ENCODE measurements at regions of chr17 and their contacts with region 1.

Region 1: GRCh38 chr17:32783602-32784001 is 93.3 kb downstream of the MYO1D start:
- DNase-seq: no peak
- ATAC-seq: peak; percentile 34
- H3K4me3 Mint-ChIP-seq: no peak overlapping the region
- H3K27ac Mint-ChIP-seq: no peak overlapping the region
- H3K4me1 Mint-ChIP-seq: no peaks in the 10 kb centered on the region
- H3K27me3 Mint-ChIP-seq: no peaks in the 10 kb centered on the region
- CTCF ChIP-seq: peak; percentile 81

Region 2: GRCh38 chr17:32805029-32805976 is 21.7 kb after region 1 on chr17:
- CTCF ChIA-PET with region 1: interaction called, 10 read pairs
- POLR2A ChIA-PET with region 1: no interaction called
- intact Hi-C with region 1: no loop called
- DNase-seq: no peak
- ATAC-seq: no peak
- H3K4me3 Mint-ChIP-seq: no peak overlapping the region
- H3K27ac Mint-ChIP-seq: no peak overlapping the region
- H3K4me1 Mint-ChIP-seq: peaks cover 4% of the 10 kb centered on the region
- H3K27me3 Mint-ChIP-seq: peaks cover 4% of the 10 kb centered on the region
- CTCF ChIP-seq: no peak

Region 3: DNA sequence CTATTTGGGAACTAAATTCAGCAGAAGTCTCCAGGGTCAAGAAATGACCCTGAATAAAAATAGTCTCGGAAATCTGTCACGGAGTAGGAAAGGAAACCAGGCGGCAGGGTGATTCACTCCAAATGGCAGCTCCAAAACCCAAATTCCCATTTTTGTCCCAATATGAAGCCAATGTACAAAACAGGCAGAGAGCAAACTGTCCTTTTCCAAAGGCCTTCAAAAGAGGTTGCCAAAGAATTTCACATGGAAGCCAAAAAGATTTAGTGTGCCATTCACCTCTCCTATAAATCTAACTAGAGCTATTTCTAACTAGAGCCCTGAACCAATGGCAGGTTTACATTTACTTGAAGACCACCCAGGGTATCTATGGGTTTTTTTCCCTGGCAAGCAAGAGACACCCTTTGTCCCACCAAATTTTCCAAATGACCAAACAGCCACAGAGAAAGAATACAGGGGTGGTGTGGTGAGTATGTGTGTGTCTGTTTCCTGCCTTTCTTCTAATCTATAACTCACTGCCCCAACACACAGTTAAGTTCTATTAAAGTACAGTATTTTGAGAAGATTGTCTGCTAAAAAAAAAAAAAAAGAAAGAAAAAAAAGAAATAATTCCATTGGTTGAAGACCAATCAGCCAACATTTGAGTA is 86.5 kb after region 1 on chr17:
- CTCF ChIA-PET with region 1: interaction called, 130 read pairs
- POLR2A ChIA-PET with region 1: no interaction called
- intact Hi-C with region 1: loop called (anchors 5 kb)
- DNase-seq: no peak
- ATAC-seq: no peak
- H3K4me3 Mint-ChIP-seq: no peak overlapping the region
- H3K27ac Mint-ChIP-seq: no peak overlapping the region
- H3K4me1 Mint-ChIP-seq: no peaks in the 10 kb centered on the region
- H3K27me3 Mint-ChIP-seq: no peaks in the 10 kb centered on the region
- CTCF ChIP-seq: no peak

Region 4: DNA sequence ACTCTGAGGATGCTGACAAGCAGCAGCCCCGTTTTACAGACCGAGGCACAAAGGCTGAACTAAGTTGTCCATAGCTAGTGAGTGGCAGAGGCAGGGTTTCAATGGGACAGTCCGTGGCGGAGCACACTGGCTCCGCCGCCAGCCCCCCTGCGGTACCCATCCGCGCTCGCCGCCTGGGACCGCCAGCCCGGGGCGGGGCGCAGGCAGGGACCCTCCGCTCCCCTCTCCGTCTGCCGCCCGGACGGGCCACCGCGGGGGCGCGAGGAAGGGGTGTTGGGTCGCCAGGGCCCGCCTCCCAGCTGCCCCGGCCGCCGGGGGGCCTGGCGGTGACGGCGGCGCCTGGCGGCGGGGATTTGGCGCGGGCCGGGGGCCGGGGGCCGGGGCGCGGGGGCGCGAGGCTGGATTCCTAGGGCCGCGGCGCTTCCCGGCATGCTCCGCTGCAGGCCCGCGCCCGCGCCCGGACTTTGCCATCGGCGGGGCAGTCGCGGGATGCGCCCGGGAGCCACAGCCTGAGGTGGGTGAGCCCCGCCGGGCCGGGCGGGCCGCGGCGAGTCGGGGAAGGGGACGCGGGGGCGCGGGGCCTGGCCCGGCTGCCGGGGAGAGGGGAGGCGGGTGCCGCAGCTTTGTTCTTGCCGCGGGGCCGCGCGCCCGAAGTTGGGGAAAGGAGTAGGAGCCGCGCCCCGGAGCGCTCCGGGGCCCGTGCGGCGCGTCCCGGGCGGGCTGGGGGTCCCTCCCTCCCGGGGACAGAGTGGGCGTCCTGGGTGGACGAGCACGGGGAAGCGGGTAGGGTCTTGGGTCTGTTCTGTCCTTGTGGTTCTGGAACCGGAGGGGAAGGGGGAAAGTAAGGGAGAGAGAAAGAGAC is 144.4 kb after region 1 on chr17 and contains the start of gene TMEM98:
- CTCF ChIA-PET with region 1: interaction called, 12 read pairs
- POLR2A ChIA-PET with region 1: no interaction called
- intact Hi-C with region 1: no loop called
- DNase-seq: peak; percentile 7
- ATAC-seq: peak; percentile 30
- H3K4me3 Mint-ChIP-seq: peak within 1 kb of the TSS; percentile 46
- H3K27ac Mint-ChIP-seq: no peak within 1 kb of the TSS
- H3K4me1 Mint-ChIP-seq: peaks cover 4% of the 10 kb centered on the region
- H3K27me3 Mint-ChIP-seq: peaks cover 33% of the 10 kb centered on the region
- CTCF ChIP-seq: no peak
- total RNA-seq, gene TMEM98: not detected

Region 5: DNA sequence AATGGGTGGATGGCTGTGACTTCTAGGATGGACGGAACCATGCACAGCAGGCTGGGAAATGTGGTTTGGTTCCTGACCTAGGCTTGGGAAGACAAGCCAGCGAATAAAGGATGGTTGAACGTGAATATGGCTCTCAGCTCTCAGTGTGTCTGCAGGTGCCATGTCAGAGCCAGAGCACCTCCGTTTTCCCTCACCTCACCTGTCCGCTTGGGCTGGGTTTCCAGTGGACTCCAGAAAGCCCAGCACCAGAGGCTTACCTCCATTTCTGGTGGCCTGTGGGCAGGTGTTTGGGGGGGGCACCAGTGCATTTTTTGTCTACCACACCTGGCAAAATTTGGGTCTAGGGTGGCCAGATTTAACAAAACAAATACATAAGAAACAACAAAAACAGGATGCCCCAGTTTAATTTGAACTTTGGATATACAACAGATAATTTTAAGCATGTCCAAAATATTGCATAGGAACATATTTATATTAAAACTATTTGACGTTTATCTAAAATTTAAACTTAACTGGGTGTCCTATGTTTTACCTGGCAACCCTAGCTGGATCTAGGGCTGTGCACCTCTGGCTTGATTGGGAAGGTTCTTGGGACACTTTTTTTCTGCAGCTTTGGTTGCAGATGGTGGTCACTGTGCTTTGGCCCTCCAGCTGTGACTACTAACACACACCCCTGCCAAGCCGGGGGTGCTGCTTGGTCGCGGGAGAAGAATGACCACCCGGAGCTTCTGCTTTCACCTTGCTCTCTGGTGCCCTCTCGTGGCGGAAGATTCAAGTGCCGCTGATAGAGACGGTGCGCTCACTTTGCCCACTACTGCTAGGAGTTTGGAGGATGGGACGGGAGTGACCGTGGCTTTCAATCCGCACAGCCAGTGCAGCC is 214.4 kb after region 1 on chr17:
- CTCF ChIA-PET with region 1: interaction called, 14 read pairs
- POLR2A ChIA-PET with region 1: no interaction called
- intact Hi-C with region 1: no loop called
- DNase-seq: peak; percentile 86
- ATAC-seq: peak; percentile 68
- H3K4me3 Mint-ChIP-seq: no peak overlapping the region
- H3K27ac Mint-ChIP-seq: no peak overlapping the region
- H3K4me1 Mint-ChIP-seq: peaks cover 2% of the 10 kb centered on the region
- H3K27me3 Mint-ChIP-seq: peaks cover 24% of the 10 kb centered on the region
- CTCF ChIP-seq: peak; percentile 79

Measured in activated CD8-positive, alpha-beta T cell treated with anti-CD3 and anti-CD28 coated beads for 36 hours (primary cell).